ENCODE measurements at regions of chr5 and their contacts with region 1.

Region 1: DNA sequence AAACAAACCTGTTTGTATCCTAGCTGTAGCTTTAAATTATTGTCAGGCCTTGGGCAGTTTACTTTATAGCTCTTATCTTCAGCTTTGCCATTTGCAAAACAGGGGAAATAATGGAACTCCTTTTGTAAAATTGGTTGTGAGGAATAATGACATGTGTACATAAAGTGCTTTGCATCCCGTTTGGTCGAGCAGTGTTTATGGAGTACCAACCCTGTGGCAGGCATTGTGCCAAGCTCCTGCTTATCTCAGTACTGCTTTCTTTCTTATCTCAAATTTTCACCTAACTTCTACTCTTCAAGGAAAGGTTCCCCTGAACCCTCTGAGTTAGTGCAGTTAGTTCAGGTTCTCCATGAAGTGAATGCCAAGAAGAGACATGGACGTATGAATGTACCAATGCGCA is 9.4 kb upstream of the TENT2 start:
- DNase-seq: no peak
- ATAC-seq: no peak; the same call in 1 of the 2 replicates
- H3K4me3 ChIP-seq: no peak overlapping the region
- H3K27ac ChIP-seq: no peak overlapping the region
- H3K4me1 ChIP-seq: peaks cover 5% of the 10 kb centered on the region
- H3K27me3 ChIP-seq: no peaks in the 10 kb centered on the region
- CTCF ChIP-seq: no peak

Region 2: DNA sequence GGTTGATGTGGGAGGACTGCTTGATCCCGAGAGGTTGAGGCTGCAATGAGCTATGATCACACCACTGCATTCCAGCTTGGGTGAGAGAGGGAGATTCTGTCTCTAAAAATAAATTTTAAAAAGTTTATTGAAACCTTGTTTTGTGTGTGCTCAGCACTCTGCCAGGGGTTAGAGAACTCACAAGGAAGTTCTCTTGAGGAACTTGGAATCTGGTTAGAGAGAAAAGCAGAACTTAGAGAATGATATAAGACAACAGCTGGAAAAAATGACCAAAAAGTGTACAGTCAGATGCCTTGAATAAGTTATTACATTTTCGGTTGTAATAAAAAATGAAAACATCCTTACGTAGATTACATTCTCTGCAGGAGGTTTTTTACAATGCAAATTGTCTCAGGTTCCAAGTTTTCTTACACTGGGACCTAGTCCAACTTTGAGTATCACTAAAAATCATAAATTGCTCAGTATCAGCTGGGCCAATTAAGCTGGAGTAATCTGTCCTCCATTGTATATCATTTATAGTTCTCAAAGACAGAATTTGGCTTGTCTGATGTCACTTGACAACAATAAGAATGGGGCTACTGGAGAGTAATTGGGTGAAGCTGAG is 12.4 kb before region 1 on chr5:
- CTCF ChIA-PET with region 1: no interaction called
- POLR2A ChIA-PET with region 1: interaction called, 11 read pairs
- in situ Hi-C with region 1: no loop called
- intact Hi-C with region 1: no loop called
- DNase-seq: no peak
- ATAC-seq: no peak
- H3K4me3 ChIP-seq: no peak overlapping the region
- H3K27ac ChIP-seq: no peak overlapping the region
- H3K4me1 ChIP-seq: no peaks in the 10 kb centered on the region
- H3K27me3 ChIP-seq: no peaks in the 10 kb centered on the region
- CTCF ChIP-seq: no peak

Region 3: GRCh38 chr5:79621042-79621441 is 18.2 kb after region 1 on chr5:
- CTCF ChIA-PET with region 1: no interaction called
- POLR2A ChIA-PET with region 1: no interaction called
- in situ Hi-C with region 1: no loop called
- intact Hi-C with region 1: no loop called
- DNase-seq: peak; percentile 52
- ATAC-seq: no peak
- H3K4me3 ChIP-seq: no peak overlapping the region
- H3K27ac ChIP-seq: no peak overlapping the region
- H3K4me1 ChIP-seq: no peaks in the 10 kb centered on the region
- H3K27me3 ChIP-seq: no peaks in the 10 kb centered on the region
- CTCF ChIP-seq: no peak

Region 4: GRCh38 chr5:79702606-79703382 is 99.9 kb after region 1 on chr5:
- CTCF ChIA-PET with region 1: no interaction called
- POLR2A ChIA-PET with region 1: no interaction called
- in situ Hi-C with region 1: no loop called
- intact Hi-C with region 1: no loop called
- DNase-seq: no peak
- ATAC-seq: no peak
- H3K4me3 ChIP-seq: no peak overlapping the region
- H3K27ac ChIP-seq: no peak overlapping the region
- H3K4me1 ChIP-seq: no peaks in the 10 kb centered on the region
- H3K27me3 ChIP-seq: no peaks in the 10 kb centered on the region
- CTCF ChIP-seq: peak; percentile 73

Measured in Panc1 (cell line).